Activated CD4-positive, alpha-beta T cell treated with anti-CD3 and anti-CD28 coated beads, Interleukin-2, amount 10 ng/mL, durations not matched to agents 24 days and 14 days (primary cell): ENCODE measurements at regions of chr9 and their contacts with region 1.

Region 1: GRCh38 chr9:6827439-6827838 is 69.7 kb downstream of the KDM4C start:
- DNase-seq: peak; percentile 86
- H3K4me3 Mint-ChIP-seq: no peak overlapping the region
- H3K27ac Mint-ChIP-seq: peak overlapping the region; percentile 68
- H3K4me1 Mint-ChIP-seq: peaks cover 5% of the 10 kb centered on the region
- H3K27me3 Mint-ChIP-seq: no peaks in the 10 kb centered on the region

Region 2: DNA sequence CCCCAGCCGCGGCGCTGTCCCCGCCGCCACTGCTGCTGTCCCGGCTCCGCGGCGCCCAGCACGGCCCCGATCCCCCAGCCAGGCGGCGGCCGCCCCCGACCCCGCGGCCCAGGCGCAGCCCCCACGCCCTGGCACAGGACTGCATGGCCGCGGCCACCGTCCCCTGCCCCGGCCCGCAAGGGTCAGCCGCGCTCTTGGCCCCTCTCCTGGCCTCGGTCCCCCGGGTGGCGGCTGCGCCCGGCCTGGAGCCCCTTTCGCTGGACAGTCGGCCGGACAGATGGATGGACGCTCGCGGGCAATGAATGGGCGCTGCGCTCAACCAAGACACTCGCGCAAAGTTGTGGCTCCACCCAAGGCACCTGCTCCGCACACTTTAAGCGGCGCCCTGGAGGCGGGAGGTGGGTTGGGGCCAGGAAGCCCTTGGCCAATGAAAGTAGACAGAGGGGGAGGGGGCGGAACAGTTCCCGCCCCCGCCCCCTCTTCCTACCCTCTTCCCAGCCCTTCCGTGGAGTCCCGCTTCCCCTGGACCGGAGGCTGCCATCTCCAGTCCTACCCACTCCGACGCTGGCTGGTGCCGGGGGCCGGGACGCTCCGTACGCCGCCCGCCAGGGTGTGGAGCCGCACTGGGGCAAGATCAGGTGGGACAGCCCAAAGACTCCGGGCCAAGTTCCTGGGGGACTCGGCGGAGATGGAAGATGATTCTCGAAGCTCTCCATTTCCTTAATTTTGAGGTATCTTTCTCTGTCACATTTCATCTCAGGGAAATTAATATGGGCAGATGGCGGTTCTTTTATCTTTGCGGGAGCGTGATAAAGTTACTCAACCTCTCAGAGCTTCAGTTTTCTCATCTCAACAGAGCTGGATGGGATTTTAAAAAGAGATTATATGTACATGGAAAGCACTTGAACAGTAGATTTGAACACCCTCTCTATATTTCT is 181.8 kb before region 1 on chr9 and contains the start of gene GLDC:
- intact Hi-C with region 1: no loop called
- DNase-seq: peak; percentile 81
- H3K4me3 Mint-ChIP-seq: peak within 1 kb of the TSS; percentile 84
- H3K27ac Mint-ChIP-seq: no peak within 1 kb of the TSS
- H3K4me1 Mint-ChIP-seq: peaks cover 19% of the 10 kb centered on the region
- H3K27me3 Mint-ChIP-seq: peaks cover 60% of the 10 kb centered on the region
- total RNA-seq, gene GLDC: 0.73 and 1.1 TPM in 2 replicates

Region 3: GRCh38 chr9:7042124-7042523 is 214.7 kb after region 1 on chr9:
- intact Hi-C with region 1: loop called (anchors 5 kb)
- DNase-seq: no peak
- H3K4me3 Mint-ChIP-seq: no peak overlapping the region
- H3K27ac Mint-ChIP-seq: no peak overlapping the region
- H3K4me1 Mint-ChIP-seq: peaks cover 10% of the 10 kb centered on the region
- H3K27me3 Mint-ChIP-seq: no peaks in the 10 kb centered on the region